Activated CD4-positive, alpha-beta T cell treated with anti-CD3 and anti-CD28 coated beads, Interleukin-2, amount 10 ng/mL, durations not matched to agents 24 days and 14 days (primary cell): ENCODE measurements at regions of chr11 and their contacts with region 1.

Region 1: DNA sequence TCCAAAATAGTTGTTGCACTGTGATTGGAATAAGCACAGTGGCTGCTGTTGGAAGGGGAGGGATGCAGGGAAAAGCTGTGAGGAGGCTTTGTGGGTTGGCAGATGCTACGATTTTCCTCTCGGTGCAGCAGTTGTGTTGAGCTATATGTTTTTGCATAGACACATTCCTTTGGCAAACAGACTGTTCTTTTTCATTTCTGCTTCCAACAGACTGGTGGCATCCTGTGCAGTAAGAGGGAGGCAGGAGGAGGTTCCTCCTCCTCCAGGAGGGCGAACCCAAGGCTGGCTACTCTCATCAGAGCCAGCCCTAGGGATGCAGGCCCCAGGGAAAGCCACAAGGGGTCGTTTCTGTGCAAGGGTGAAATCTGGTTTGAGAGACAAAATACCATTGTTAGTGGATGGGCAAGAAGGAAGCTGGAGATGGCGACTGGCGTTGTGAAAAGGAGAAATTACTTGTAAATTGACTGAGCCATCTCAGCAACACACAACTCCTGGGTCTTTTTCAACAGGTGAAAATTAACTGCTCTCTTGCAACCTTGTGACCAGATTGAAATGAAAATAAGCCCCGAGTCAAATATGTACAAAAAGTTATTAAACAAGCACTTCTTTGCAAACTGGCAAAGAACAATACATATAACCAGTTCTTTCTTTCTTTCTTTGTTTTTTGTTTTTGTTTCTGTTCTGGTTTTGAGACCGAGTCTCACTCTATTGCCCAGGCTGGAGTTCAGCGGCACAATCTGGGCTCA is 26.5 kb upstream of the UBASH3B start:
- DNase-seq: peak; percentile 88
- H3K4me3 Mint-ChIP-seq: no peak overlapping the region
- H3K27ac Mint-ChIP-seq: no peak overlapping the region
- H3K4me1 Mint-ChIP-seq: no peaks in the 10 kb centered on the region
- H3K27me3 Mint-ChIP-seq: peaks cover 20% of the 10 kb centered on the region

Region 2: GRCh38 chr11:122430490-122430889 is 198.5 kb before region 1 on chr11:
- intact Hi-C with region 1: no loop called
- DNase-seq: no peak
- H3K4me3 Mint-ChIP-seq: no peak overlapping the region
- H3K27ac Mint-ChIP-seq: no peak overlapping the region
- H3K4me1 Mint-ChIP-seq: no peaks in the 10 kb centered on the region
- H3K27me3 Mint-ChIP-seq: no peaks in the 10 kb centered on the region

Region 3: GRCh38 chr11:122584670-122585069 is 44.3 kb before region 1 on chr11:
- intact Hi-C with region 1: loop called (anchors 5 kb)
- DNase-seq: no peak
- H3K4me3 Mint-ChIP-seq: no peak overlapping the region
- H3K27ac Mint-ChIP-seq: no peak overlapping the region
- H3K4me1 Mint-ChIP-seq: peaks cover 7% of the 10 kb centered on the region
- H3K27me3 Mint-ChIP-seq: peaks cover 5% of the 10 kb centered on the region

Region 4: GRCh38 chr11:122754553-122755322 is 125.8 kb after region 1 on chr11:
- intact Hi-C with region 1: loop called (anchors 1 kb)
- DNase-seq: peak; percentile 82
- H3K4me3 Mint-ChIP-seq: no peak overlapping the region
- H3K27ac Mint-ChIP-seq: no peak overlapping the region
- H3K4me1 Mint-ChIP-seq: peaks cover 41% of the 10 kb centered on the region
- H3K27me3 Mint-ChIP-seq: peaks cover 17% of the 10 kb centered on the region